ENCODE measurements at regions of chr17 and their contacts with region 1.

Region 1: DNA sequence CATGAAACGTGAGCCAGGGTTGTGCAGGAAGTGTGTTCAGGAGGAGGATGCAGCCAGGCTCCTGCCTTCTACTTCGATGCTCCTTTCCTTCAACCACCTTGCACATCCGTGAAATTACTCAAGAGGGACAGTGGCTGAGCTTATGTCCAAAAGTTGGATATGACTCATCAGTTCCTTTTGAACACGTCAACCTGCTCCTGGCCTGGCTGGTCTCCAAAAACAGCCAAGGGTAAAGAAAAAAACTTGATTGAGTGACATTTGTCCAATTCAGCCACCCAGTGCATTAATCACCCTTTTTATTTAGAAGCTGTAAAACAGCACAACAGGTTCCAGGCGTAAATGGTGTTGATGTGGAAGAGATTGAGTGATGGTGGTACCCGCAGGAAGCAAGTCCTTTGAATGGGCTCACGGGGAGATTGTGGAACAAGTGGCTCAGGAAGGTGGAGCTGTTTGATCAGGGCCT is 173.5 kb upstream of the CACNG5 start:
- DNase-seq: no peak
- H3K4me3 ChIP-seq: no peak overlapping the region
- H3K27ac ChIP-seq: no peak overlapping the region
- H3K4me1 ChIP-seq: no peaks in the 10 kb centered on the region
- H3K27me3 ChIP-seq: no peaks in the 10 kb centered on the region
- CTCF ChIP-seq: no peak
- EP300 ChIP-seq: no peak
- POLR2A ChIP-seq: no peak

Region 2: GRCh38 chr17:66275651-66276050 is 385.8 kb before region 1 on chr17:
- intact Hi-C with region 1: loop called in 1 of 4 experiments (anchors 10 kb)
- DNase-seq: no peak
- H3K4me3 ChIP-seq: no peak overlapping the region
- H3K27ac ChIP-seq: no peak overlapping the region
- H3K4me1 ChIP-seq: peaks cover 3% of the 10 kb centered on the region
- H3K27me3 ChIP-seq: no peaks in the 10 kb centered on the region
- CTCF ChIP-seq: no peak
- EP300 ChIP-seq: no peak
- POLR2A ChIP-seq: no peak

Region 3: GRCh38 chr17:66580184-66580955 is 81.0 kb before region 1 on chr17:
- intact Hi-C with region 1: no loop called
- DNase-seq: peak; percentile 71 to 92 (median 83)
- H3K4me3 ChIP-seq: no peak overlapping the region
- H3K27ac ChIP-seq: peak overlapping the region in 1 of 2 donors; percentile 27
- H3K4me1 ChIP-seq: peaks cover 18% of the 10 kb centered on the region
- H3K27me3 ChIP-seq: no peaks in the 10 kb centered on the region
- CTCF ChIP-seq: no peak
- EP300 ChIP-seq: no peak
- POLR2A ChIP-seq: no peak

Measured in ovary (tissue), 10 donors.